Kidney (tissue), 22 donors: ENCODE measurements at regions of chr17 and their contacts with region 1.

Region 1: DNA sequence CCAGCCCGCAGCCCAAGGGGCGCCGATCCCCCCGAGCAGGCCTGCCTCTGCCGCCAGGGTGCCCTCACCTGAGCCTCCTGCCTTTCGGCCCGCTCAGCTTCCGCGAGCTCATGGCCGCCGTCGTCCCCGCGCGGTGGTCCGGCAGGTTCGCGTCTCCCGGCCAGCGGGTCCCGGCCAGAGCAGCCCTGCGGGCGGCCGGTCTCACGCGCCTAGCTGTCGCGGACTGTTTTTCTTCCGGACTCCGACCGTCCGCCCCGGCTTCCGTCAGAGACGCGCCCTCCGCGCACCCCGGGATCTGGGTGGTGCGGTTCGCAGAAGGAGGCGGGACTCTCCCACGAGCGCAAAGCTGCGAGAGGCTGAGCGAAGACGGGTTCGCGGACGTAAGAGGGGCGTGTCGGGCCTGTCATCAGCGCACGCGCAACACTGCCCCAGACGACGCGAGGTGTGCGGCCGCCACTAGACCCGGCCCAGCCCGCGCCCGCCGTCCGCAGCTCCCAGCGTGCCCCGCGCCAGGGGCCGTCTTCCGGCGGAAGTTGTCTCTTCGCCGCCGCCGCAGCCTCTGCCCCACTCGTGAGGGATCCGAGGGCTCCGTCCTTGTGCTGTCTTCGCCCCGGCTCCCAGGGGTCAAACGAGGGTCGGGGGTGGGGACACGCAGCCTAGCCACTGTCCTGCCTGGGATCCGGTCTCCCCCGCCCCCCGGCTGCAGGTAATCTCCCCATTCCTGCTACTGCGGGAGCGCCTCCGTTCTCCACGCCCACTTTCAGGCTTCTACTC is at the start of gene INPP5K:
- DNase-seq: peak; percentile 98 to 99 (median 98)
- H3K4me3 ChIP-seq: peak within 1 kb of the TSS; percentile 78 to 89 (median 83)
- H3K27ac ChIP-seq: peak within 1 kb of the TSS; percentile 84 to 85
- H3K4me1 ChIP-seq: peaks cover 3 to 13% (median 10%) of the 10 kb centered on the region in 3 donors
- H3K27me3 ChIP-seq: no peaks in the 10 kb centered on the region
- CTCF ChIP-seq: no peak
- total RNA-seq, gene INPP5K: 46.2 TPM

Region 2: DNA sequence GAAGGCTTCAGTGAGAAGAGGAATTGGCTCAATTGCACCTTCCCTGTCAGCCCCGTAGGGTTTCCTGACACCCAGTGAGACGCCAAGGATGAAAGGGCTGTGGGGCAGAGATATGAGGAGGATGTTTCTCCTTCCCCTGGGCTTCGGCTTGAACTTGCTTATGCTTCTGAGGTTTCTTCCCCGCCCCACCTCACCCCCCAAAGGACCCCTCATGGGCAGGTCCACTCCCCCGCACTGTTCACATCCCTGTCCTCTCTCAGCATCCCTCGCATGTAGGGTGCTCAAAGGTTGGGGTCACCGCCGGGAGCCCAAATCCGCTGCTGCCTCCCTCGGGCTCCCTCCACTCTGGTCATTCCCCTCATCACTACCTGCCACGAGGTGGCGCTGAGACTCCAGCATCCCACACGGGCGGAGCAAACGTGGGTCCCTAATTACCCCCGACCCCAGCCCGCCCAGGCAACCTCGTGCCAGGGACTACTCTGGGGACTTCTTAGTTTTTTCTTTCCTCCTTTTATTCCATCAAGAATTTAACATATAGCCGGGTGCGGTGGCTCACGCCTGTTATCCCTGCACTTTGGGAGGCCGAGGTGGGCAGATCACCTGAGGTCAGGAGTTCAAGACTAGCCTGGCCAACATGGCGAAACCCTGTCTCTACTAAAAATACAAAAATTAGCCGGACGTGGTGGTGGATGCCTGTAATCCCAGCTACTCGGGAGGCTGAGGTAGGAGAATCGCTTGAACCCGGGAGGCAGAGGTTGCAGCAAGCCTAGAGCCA is 240.4 kb before region 1 on chr17:
- intact Hi-C with region 1: loop called (anchors 10 kb)
- DNase-seq: peak in 2 of 5 donors; percentile 73 to 76
- H3K4me3 ChIP-seq: no peak overlapping the region
- H3K27ac ChIP-seq: no peak overlapping the region
- H3K4me1 ChIP-seq: no peaks in the 10 kb centered on the region
- H3K27me3 ChIP-seq: no peaks in the 10 kb centered on the region
- CTCF ChIP-seq: peak; percentile 79

Region 3: GRCh38 chr17:1716076-1716995 is 199.8 kb after region 1 on chr17:
- intact Hi-C with region 1: no loop called
- DNase-seq: peak; percentile 100
- H3K4me3 ChIP-seq: peak overlapping the region; percentile 75 to 98 (median 82)
- H3K27ac ChIP-seq: peak overlapping the region; percentile 99 to 100
- H3K4me1 ChIP-seq: peaks cover 3 to 33% (median 29%) of the 10 kb centered on the region in 3 donors
- H3K27me3 ChIP-seq: no peaks in the 10 kb centered on the region
- CTCF ChIP-seq: peak; percentile 5